HCT116 (cell line): ENCODE measurements at regions of chr4 and their contacts with region 1.

Region 1: GRCh38 chr4:88211473-88212252 is 53.2 kb upstream of the ABCG2 start:
- DNase-seq: peak; percentile 47
- ATAC-seq: peak; percentile 83
- H3K4me3 ChIP-seq: no peak overlapping the region
- H3K27ac ChIP-seq: no peak overlapping the region
- H3K4me1 ChIP-seq: peaks cover 0 to 2% of the 10 kb centered on the region in 2 experiments; a peak in 1 of 4 replicates
- H3K27me3 ChIP-seq: no peaks in the 10 kb centered on the region
- CTCF ChIP-seq: peak; percentile 45 to 87 (median 80); a peak in 5 of 6 replicates
- POLR2A ChIP-seq: no peak
- RAD21 ChIP-seq: peak; percentile 94

Region 2: GRCh38 chr4:87433342-87433741 is 778.3 kb before region 1 on chr4:
- CTCF ChIA-PET with region 1: no interaction called
- POLR2A ChIA-PET with region 1: no interaction called
- RAD21 ChIA-PET with region 1: no interaction called
- intact Hi-C with region 1: no loop called
- DNase-seq: no peak
- ATAC-seq: no peak
- H3K4me3 ChIP-seq: no peak overlapping the region
- H3K27ac ChIP-seq: no peak overlapping the region
- H3K4me1 ChIP-seq: no peaks in the 10 kb centered on the region
- H3K27me3 ChIP-seq: no peaks in the 10 kb centered on the region
- CTCF ChIP-seq: no peak
- POLR2A ChIP-seq: no peak
- RAD21 ChIP-seq: no peak

Region 3: DNA sequence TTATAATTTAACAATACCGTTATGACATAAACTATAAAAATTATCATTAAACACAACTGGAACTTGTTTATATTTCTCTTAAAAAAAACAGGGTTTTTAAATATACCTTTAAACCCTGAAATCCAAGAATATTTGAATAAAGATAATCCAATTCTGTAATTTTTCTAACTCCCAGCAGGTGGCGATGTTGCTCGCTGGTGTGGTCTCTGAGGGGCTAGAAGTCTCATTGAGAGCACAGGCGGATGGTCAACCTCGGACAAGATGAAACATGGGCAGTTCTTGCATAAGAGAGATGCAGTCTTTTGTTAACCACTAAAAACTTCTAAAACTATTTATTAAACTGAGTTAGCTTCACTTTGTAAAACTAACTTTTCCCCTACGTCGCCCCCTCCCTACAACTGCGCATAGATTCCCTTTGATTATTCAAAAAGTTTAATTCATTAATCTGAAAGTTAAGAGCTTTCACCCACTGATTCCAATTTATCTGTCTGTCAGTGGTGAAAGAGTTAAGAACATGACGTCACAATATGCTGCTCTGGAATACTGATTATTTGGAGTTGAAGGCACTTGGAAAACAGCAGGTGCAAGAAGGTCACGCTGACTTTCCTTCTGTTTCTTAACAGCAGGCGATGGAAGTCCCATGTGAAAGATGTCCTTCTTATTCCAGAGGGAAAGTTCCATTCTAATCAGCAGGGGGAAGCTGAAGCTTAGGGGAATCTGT is 532.1 kb before region 1 on chr4:
- CTCF ChIA-PET with region 1: no interaction called
- POLR2A ChIA-PET with region 1: no interaction called
- RAD21 ChIA-PET with region 1: no interaction called
- intact Hi-C with region 1: loop called (anchors 5 kb)
- DNase-seq: peak; percentile 48
- ATAC-seq: peak; percentile 72
- H3K4me3 ChIP-seq: no peak overlapping the region
- H3K27ac ChIP-seq: no peak overlapping the region
- H3K4me1 ChIP-seq: no peaks in the 10 kb centered on the region
- H3K27me3 ChIP-seq: no peaks in the 10 kb centered on the region
- CTCF ChIP-seq: peak; percentile 67 to 94 (median 84)
- POLR2A ChIP-seq: no peak
- RAD21 ChIP-seq: peak; percentile 89

Region 4: GRCh38 chr4:87848622-87849351 is 362.9 kb before region 1 on chr4:
- CTCF ChIA-PET with region 1: interaction called, 18 read pairs
- POLR2A ChIA-PET with region 1: no interaction called
- RAD21 ChIA-PET with region 1: interaction called, 5 read pairs
- intact Hi-C with region 1: loop called (anchors 1 kb)
- DNase-seq: peak; percentile 51
- ATAC-seq: peak; percentile 97
- H3K4me3 ChIP-seq: peak overlapping the region; percentile 30 to 48
- H3K27ac ChIP-seq: no peak overlapping the region
- H3K4me1 ChIP-seq: peaks cover 0 to 9% of the 10 kb centered on the region in 2 experiments; a peak in 3 of 4 replicates
- H3K27me3 ChIP-seq: no peaks in the 10 kb centered on the region
- CTCF ChIP-seq: peak; percentile 55 to 62 (median 58)
- POLR2A ChIP-seq: no peak
- RAD21 ChIP-seq: peak; percentile 55

Region 5: DNA sequence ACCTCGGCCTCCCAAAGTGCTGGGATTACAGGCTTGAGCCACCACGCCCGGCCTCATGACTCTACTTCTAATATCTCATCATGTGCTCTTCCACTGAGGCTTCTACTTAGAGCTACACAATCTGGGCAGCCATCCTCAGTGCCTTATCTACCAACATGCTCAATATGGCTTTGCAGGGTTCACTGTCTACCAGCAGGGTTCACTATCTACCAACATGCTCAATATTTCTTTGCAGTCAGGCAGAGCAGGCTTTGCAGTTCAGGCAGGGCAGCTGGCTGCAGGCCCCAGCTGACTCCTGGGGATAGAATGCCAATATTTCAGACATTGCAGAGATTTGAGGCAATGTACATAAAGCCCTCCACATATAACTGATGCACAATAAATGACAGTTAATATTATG is 156.8 kb before region 1 on chr4:
- CTCF ChIA-PET with region 1: interaction called, 42 read pairs
- POLR2A ChIA-PET with region 1: no interaction called
- RAD21 ChIA-PET with region 1: interaction called, 5 to 6 read pairs
- intact Hi-C with region 1: loop called (anchors 1 kb)
- DNase-seq: peak; percentile 23
- ATAC-seq: peak; percentile 87
- H3K4me3 ChIP-seq: no peak overlapping the region
- H3K27ac ChIP-seq: no peak overlapping the region
- H3K4me1 ChIP-seq: no peaks in the 10 kb centered on the region
- H3K27me3 ChIP-seq: no peaks in the 10 kb centered on the region
- CTCF ChIP-seq: peak; percentile 49 to 58 (median 57); a peak in 5 of 6 replicates
- POLR2A ChIP-seq: no peak
- RAD21 ChIP-seq: peak; percentile 79

Region 6: GRCh38 chr4:88060431-88060830 is 151.2 kb before region 1 on chr4:
- CTCF ChIA-PET with region 1: interaction called, 42 read pairs
- POLR2A ChIA-PET with region 1: no interaction called
- RAD21 ChIA-PET with region 1: interaction called, 5 to 6 read pairs
- intact Hi-C with region 1: loop called (anchors 1 kb)
- DNase-seq: no peak
- ATAC-seq: no peak
- H3K4me3 ChIP-seq: no peak overlapping the region
- H3K27ac ChIP-seq: no peak overlapping the region
- H3K4me1 ChIP-seq: no peaks in the 10 kb centered on the region
- H3K27me3 ChIP-seq: no peaks in the 10 kb centered on the region
- CTCF ChIP-seq: no peak
- POLR2A ChIP-seq: no peak
- RAD21 ChIP-seq: no peak

Region 7: GRCh38 chr4:88382621-88383020 is 171.0 kb after region 1 on chr4:
- CTCF ChIA-PET with region 1: no interaction called
- POLR2A ChIA-PET with region 1: no interaction called
- RAD21 ChIA-PET with region 1: no interaction called
- intact Hi-C with region 1: no loop called
- DNase-seq: no peak
- ATAC-seq: no peak
- H3K4me3 ChIP-seq: no peak overlapping the region
- H3K27ac ChIP-seq: no peak overlapping the region
- H3K4me1 ChIP-seq: peaks cover 0 to 5% of the 10 kb centered on the region in 2 experiments; a peak in 1 of 4 replicates
- H3K27me3 ChIP-seq: no peaks in the 10 kb centered on the region
- CTCF ChIP-seq: no peak
- POLR2A ChIP-seq: no peak
- RAD21 ChIP-seq: no peak

Region 8: DNA sequence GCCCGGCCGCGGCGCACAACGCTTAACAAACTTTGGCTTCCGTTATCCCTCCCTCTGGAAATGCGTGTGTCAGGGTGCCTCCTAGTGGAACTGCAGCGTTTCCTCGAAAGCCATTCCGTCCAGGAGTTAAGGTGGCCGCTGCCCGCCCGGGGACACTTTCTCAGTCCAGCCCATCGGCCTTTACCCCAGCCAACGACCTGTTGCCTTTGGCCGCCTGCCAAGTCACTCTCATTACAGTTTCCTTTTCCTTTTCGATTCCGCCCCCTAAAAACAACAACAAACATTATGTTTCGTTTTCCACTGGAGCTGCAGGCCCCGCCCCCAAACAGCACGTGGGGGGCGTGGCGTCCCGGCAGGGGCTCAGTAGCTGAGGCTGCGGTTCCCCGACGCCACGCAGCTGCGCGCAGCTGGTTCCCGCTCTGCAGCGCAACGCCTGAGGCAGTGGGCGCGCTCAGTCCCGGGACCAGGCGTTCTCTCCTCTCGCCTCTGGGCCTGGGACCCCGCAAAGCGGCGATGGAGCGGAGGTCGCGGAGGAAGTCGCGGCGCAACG is 245.2 kb after region 1 on chr4 and contains the start of gene HERC5:
- CTCF ChIA-PET with region 1: no interaction called
- POLR2A ChIA-PET with region 1: no interaction called
- RAD21 ChIA-PET with region 1: interaction called in 1 of 2 experiments, 3 read pairs
- intact Hi-C with region 1: loop called (anchors 5 kb)
- DNase-seq: peak; percentile 85
- ATAC-seq: peak; percentile 91
- H3K4me3 ChIP-seq: peak within 1 kb of the TSS; percentile 50 to 64
- H3K27ac ChIP-seq: peak within 1 kb of the TSS; percentile 40; the same call in 1 of the 2 replicates
- H3K4me1 ChIP-seq: peaks cover 3 to 21% of the 10 kb centered on the region in 2 experiments; a peak in 2 of 4 replicates
- H3K27me3 ChIP-seq: no peaks in the 10 kb centered on the region
- CTCF ChIP-seq: peak; percentile 60 to 73 (median 65)
- POLR2A ChIP-seq: no peak
- RAD21 ChIP-seq: peak; percentile 82
- total RNA-seq, gene HERC5: 7.2 TPM

Region 9: GRCh38 chr4:88514557-88515511 is 303.2 kb after region 1 on chr4:
- CTCF ChIA-PET with region 1: interaction called, 11 read pairs
- POLR2A ChIA-PET with region 1: no interaction called
- RAD21 ChIA-PET with region 1: interaction called in 1 of 2 experiments, 3 read pairs
- intact Hi-C with region 1: no loop called
- DNase-seq: no peak
- ATAC-seq: no peak
- H3K4me3 ChIP-seq: no peak overlapping the region
- H3K27ac ChIP-seq: no peak overlapping the region
- H3K4me1 ChIP-seq: no peaks in the 10 kb centered on the region
- H3K27me3 ChIP-seq: no peaks in the 10 kb centered on the region
- CTCF ChIP-seq: no peak
- POLR2A ChIP-seq: no peak
- RAD21 ChIP-seq: no peak